Body of pancreas (tissue), 4 donors: ENCODE measurements at regions of chr1 and their contacts with region 1.

Region 1: DNA sequence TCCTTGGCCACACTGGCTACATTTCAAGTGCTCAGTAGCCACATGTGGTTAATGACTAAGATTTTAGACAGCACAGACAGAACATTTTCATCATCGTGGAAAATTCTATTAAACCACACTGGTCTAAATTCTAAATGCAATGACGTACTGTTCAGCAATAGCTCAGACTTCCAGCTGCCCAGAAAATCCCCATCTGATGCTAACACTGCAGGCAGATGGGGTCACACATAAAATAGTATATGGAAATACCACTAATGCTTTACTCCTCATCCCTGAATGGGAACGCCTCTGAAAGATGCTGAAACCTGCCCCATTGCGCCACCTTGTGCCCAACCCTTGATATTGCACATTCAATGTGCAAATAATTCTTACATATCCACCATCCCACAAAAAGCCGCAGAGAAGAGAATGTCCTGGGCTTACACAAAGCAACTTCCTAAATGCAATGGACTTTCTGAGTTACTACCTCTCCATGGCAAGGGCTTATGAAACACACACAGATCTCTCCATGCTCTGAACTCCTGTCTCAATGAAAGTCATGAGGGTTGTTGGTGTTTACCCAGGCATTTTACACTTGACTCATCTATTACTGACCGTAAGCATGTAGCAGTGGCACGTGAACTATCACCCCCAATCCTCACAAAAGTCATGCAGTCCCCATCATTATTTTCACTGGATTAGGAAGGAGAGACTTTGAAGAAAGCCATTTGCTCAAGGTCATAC is 20.3 kb upstream of the SLC5A9 start:
- DNase-seq: peak; percentile 69 to 74 (median 72)
- ATAC-seq: peak; percentile 78
- H3K4me3 ChIP-seq: no peak overlapping the region
- H3K27ac ChIP-seq: no peak overlapping the region
- H3K4me1 ChIP-seq: no peaks in the 10 kb centered on the region
- H3K27me3 ChIP-seq: no peaks in the 10 kb centered on the region
- CTCF ChIP-seq: peak; percentile 58 to 84 (median 80)
- POLR2A ChIP-seq: no peak

Region 2: DNA sequence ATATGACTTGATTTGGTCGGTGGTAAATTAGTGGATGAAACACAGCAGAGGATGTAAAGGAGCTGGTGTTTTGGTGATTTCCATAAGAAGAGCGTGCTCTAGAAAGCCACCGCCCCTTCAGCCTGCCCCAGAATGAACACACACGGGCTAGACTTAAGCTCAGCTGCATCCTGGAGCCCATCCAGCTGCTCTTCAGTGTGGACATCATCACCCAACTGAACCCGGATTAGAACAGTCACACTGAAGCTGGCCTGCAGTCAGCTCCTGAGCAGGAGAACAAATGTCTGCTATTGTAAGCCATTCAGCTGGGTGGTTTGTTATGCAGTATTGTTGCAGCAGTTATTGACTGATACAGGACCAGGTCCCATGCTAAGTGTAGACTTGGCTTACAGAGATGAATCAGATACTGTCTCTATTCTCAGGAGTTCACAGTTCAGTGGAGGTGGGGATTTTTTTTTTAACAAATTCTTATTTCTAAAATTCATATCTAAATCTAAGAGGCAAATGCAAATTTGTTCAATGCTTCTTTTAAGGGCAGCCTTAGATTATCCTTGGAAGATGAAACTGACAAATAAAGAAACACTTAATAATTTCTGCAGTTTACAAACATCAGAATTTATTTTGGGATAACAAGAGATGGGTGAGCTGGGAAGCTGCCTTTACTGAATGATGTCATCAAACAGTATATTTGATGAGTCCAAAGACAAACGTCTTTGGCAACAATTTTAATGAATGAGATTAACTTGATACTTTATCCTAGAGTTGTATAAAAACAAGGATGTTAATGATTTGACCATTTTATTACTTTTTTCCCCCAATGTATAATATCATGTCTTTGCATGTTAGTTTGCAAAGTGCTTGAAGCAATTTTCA is 456.2 kb before region 1 on chr1:
- intact Hi-C with region 1: loop called (anchors 10 kb)
- DNase-seq: no peak
- ATAC-seq: no peak
- H3K4me3 ChIP-seq: no peak overlapping the region
- H3K27ac ChIP-seq: no peak overlapping the region
- H3K4me1 ChIP-seq: no peaks in the 10 kb centered on the region
- H3K27me3 ChIP-seq: no peaks in the 10 kb centered on the region
- CTCF ChIP-seq: no peak
- POLR2A ChIP-seq: no peak

Region 3: GRCh38 chr1:48109390-48110013 is 92.7 kb before region 1 on chr1:
- intact Hi-C with region 1: loop called (anchors 2 kb)
- DNase-seq: peak; percentile 18 to 61 (median 36)
- ATAC-seq: peak; percentile 68
- H3K4me3 ChIP-seq: no peak overlapping the region
- H3K27ac ChIP-seq: no peak overlapping the region
- H3K4me1 ChIP-seq: no peaks in the 10 kb centered on the region
- H3K27me3 ChIP-seq: no peaks in the 10 kb centered on the region
- CTCF ChIP-seq: peak; percentile 70 to 89 (median 86)
- POLR2A ChIP-seq: no peak

Region 4: DNA sequence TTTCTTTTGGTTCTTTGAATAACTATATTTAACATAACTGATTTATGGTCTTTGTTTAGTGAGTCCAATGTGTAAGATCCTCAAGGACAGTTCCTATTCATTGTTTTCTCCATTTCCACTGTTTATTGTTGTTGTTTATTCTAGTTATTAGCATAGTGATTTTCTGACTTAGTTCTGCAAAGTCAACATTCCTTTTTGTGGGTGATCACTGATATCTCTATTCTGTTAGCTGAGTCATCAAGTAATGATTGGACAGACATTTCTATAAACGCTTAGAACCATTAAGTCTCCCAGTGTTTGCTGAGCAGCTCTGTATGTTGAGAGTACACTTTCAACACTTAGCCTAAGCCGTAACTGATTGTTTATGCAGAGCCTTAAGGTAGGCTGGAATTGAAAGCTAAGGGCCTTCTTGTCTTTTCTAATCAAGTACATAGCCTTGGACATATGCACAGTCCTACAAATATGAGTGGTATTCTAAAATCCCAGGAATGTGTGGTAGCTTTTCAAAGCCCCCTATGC is 107.4 kb after region 1 on chr1:
- intact Hi-C with region 1: no loop called
- DNase-seq: no peak
- ATAC-seq: no peak
- H3K4me3 ChIP-seq: no peak overlapping the region
- H3K27ac ChIP-seq: no peak overlapping the region
- H3K4me1 ChIP-seq: no peaks in the 10 kb centered on the region
- H3K27me3 ChIP-seq: no peaks in the 10 kb centered on the region
- CTCF ChIP-seq: no peak
- POLR2A ChIP-seq: no peak